Natural killer cell (primary cell): ENCODE measurements at regions of chr19 and their contacts with region 1.

Region 1: GRCh38 chr19:52397310-52398080 is at the start of gene ZNF528:
- DNase-seq: peak; percentile 92 to 95
- ATAC-seq: peak; percentile 90 to 98 (median 97)
- H3K4me3 ChIP-seq: peak within 1 kb of the TSS; percentile 64
- H3K4me3 Mint-ChIP-seq: peak within 1 kb of the TSS; percentile 87
- H3K27ac ChIP-seq: peak within 1 kb of the TSS; percentile 57
- H3K27ac Mint-ChIP-seq: peak within 1 kb of the TSS; percentile 89 to 97
- H3K4me1 ChIP-seq: peaks cover 12% of the 10 kb centered on the region
- H3K4me1 Mint-ChIP-seq: peaks cover 22 to 28% of the 10 kb centered on the region in 2 donors
- H3K27me3 ChIP-seq: no peaks in the 10 kb centered on the region
- H3K27me3 Mint-ChIP-seq: no peaks in the 10 kb centered on the region
- CTCF ChIP-seq: no peak
- total RNA-seq, gene ZNF528: 28.8 to 36.5 (median 36.1) TPM

Region 2: DNA sequence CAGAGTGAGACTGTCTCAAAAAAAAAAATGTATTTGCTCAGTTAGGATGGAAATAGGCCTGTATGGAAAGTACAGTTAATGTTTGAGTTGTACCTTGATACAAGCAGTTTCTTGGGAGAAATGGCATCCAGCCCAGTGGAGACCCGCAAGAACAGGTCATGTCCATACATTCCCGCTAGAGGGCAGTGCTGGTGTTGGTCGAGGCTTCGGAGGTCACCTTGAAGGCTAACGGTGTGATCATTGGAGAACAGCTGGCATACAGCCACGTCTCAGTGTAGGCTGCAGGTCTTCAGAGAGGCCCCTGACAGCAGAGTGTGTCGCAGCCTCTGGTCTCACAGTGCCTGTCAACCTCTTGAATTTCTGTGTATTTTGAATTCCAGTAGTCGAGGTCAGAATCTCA is 53.9 kb before region 1 on chr19:
- intact Hi-C with region 1: no loop called
- DNase-seq: peak; percentile 45 to 77
- ATAC-seq: peak; percentile 72 to 95 (median 91)
- H3K4me3 ChIP-seq: no peak overlapping the region
- H3K4me3 Mint-ChIP-seq: no peak overlapping the region
- H3K27ac ChIP-seq: no peak overlapping the region
- H3K27ac Mint-ChIP-seq: no peak overlapping the region
- H3K4me1 ChIP-seq: peaks cover 3% of the 10 kb centered on the region
- H3K4me1 Mint-ChIP-seq: peaks cover 0 to 5% of the 10 kb centered on the region in 2 donors
- H3K27me3 ChIP-seq: no peaks in the 10 kb centered on the region
- H3K27me3 Mint-ChIP-seq: no peaks in the 10 kb centered on the region
- CTCF ChIP-seq: peak; percentile 63

Region 3: GRCh38 chr19:52369559-52370340 is 27.7 kb before region 1 on chr19 and contains the start of gene ZNF880:
- intact Hi-C with region 1: loop called (anchors 2 kb)
- DNase-seq: peak; percentile 93
- ATAC-seq: peak; percentile 93 to 96 (median 94)
- H3K4me3 ChIP-seq: peak within 1 kb of the TSS; percentile 89
- H3K4me3 Mint-ChIP-seq: peak within 1 kb of the TSS; percentile 96
- H3K27ac ChIP-seq: peak within 1 kb of the TSS; percentile 99
- H3K27ac Mint-ChIP-seq: peak within 1 kb of the TSS; percentile 97 to 99
- H3K4me1 ChIP-seq: peaks cover 11% of the 10 kb centered on the region
- H3K4me1 Mint-ChIP-seq: peaks cover 12 to 14% of the 10 kb centered on the region in 2 donors
- H3K27me3 ChIP-seq: no peaks in the 10 kb centered on the region
- H3K27me3 Mint-ChIP-seq: no peaks in the 10 kb centered on the region
- CTCF ChIP-seq: no peak
- total RNA-seq, gene ZNF880: 23.1 to 33.2 (median 31.2) TPM

Region 4: DNA sequence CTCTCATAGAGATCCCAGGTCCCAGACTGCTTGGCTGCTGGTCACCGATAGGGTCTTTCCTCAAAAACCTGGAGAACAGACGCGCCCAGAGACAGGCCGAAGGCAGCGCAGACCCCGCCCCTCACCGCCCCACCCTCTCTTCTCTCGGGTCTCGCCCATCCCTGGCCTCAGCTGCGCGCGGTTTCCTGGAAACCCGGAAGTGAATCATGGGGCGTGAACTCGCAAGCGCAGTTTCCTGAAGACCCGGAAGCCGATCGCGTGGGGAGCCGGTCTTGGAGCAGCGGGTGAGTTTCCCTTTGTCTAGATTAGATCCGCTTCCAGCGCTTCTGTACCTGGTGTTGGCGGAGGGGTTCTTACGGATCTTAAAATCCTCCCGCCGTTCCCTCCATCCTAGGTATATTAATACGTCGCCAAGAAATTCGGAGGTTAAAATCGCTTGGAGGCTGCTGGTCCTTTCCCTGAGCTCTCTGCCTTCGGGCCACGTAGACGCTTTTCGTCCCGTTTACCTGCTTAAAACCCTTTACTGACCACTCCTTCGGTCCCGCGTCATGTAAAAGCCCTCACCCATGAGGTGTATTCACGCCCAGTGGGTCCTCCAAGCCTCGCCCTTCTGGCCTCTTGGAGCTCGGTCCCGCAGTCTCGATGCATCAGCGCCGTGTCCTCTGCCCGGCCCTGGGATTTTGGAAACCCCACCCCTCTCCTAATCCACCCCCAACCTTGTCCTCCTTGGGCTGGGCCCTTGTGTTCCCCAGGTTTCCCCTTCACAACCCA is 56.0 kb after region 1 on chr19 and contains the start of gene ZNF578:
- intact Hi-C with region 1: loop called (anchors 10 kb)
- DNase-seq: peak; percentile 66 to 72
- ATAC-seq: peak; percentile 68 to 97 (median 95)
- H3K4me3 ChIP-seq: peak within 1 kb of the TSS; percentile 75
- H3K4me3 Mint-ChIP-seq: peak within 1 kb of the TSS; percentile 91
- H3K27ac ChIP-seq: peak within 1 kb of the TSS; percentile 65
- H3K27ac Mint-ChIP-seq: peak within 1 kb of the TSS; percentile 86 to 88
- H3K4me1 ChIP-seq: peaks cover 12% of the 10 kb centered on the region
- H3K4me1 Mint-ChIP-seq: peaks cover 15 to 27% of the 10 kb centered on the region in 2 donors
- H3K27me3 ChIP-seq: no peaks in the 10 kb centered on the region
- H3K27me3 Mint-ChIP-seq: peaks cover 13 to 18% of the 10 kb centered on the region in 2 donors
- CTCF ChIP-seq: no peak
- total RNA-seq, gene ZNF578: 2.5 to 4.1 (median 3.0) TPM